ENCODE measurements at regions of chr1 and their contacts with region 1.

Region 1: DNA sequence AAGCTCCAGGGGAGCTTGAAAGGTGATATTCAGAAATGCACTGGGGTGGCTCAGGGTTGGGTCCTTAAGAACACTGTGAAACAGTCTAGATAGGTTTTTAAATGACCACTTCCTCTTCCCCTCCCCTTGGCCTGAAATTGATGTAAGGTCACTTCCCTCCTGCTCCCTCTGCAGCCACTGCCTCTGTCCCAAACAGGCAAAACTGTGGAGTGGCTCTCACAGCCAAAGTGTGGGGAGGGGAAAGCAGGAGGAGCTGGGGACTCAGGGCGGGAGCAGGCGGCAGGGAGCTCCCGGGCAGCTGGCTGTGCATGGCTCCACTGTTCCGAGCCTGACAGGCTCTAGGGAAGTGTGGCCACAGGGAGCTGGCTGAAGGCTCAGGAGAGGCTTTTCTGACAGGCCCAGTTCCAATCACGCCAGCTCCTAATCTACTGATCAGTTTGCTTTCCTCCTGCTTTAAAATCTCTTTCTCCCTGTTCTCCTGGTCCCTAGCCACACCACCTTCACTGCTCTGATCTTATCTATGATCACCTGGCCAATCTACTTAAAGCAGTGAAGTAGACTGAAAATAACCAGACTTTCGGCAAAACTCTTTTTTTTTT is 5.1 kb upstream of the CSRP1 start:
- DNase-seq: peak in 2 of 3 donors; percentile 54 to 66
- ATAC-seq: peak; percentile 31
- H3K4me3 ChIP-seq: no peak overlapping the region
- H3K4me1 ChIP-seq: peaks cover 12% of the 10 kb centered on the region
- CTCF ChIP-seq: no peak

Region 2: GRCh38 chr1:201108614-201109013 is 403.4 kb before region 1 on chr1:
- intact Hi-C with region 1: no loop called
- DNase-seq: no peak
- ATAC-seq: no peak
- H3K4me3 ChIP-seq: no peak overlapping the region
- H3K4me1 ChIP-seq: no peaks in the 10 kb centered on the region
- CTCF ChIP-seq: no peak

Region 3: DNA sequence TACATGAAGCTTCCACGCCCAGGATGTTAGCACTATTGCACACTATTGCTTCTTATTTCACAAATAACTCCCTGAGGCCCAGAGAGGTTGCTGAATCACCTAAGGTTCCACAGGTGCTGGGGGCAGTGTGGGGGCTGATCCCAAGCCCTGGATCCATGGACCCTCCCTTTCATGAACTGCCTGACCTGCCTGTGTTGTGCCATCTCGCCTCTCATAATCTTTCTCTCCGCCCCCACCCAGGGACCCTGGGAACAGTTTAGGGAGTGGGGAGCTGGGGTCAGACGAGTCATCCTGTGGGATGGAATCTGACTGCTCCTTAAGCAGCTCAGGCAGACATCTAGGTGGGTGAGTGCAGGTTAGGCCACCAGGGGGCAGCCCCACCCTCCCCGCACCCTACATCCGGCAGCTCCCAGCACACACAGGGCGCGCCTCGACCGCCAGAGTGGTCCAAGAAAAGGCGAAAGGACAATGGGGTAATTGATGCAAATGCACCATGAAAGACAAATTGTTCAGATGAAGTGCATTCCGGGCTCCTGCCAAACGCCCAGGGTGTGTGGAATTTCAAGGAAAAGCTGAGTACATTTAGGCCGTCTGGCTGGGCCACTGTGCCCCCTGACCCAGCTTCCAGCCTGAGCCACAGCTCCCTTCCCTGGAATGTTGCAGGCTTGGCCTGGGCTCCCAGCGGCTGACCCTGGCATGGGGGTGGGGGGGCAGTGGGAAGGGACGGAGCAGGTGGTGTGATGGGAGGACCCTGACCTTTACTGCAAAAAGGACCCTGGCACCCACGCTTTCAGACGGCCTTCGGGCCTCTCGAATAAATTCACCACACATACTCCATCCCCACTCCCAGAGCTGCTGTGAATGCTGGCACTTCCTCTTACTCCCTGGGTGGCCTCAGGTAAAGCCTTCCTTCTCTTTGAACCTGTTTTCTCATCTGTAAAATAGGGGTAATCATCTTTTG is 63.8 kb before region 1 on chr1:
- intact Hi-C with region 1: loop called in 1 of 2 experiments (anchors 10 kb)
- DNase-seq: peak; percentile 80 to 86 (median 85)
- ATAC-seq: peak; percentile 93
- H3K4me3 ChIP-seq: no peak overlapping the region
- H3K4me1 ChIP-seq: no peaks in the 10 kb centered on the region
- CTCF ChIP-seq: peak; percentile 67